ENCODE measurements at regions of chr19 and their contacts with region 1.

Region 1: GRCh38 chr19:29610563-29611271 is 4.6 kb downstream of the POP4 start:
- DNase-seq: peak; percentile 59
- ATAC-seq: peak; percentile 90
- H3K4me3 ChIP-seq: no peak overlapping the region
- H3K27ac ChIP-seq: peak overlapping the region; percentile 23; the same call in 1 of the 2 replicates
- H3K4me1 ChIP-seq: peaks cover 6% of the 10 kb centered on the region; the same call in 1 of the 2 replicates
- H3K27me3 ChIP-seq: no peaks in the 10 kb centered on the region
- CTCF ChIP-seq: peak; percentile 95

Region 2: DNA sequence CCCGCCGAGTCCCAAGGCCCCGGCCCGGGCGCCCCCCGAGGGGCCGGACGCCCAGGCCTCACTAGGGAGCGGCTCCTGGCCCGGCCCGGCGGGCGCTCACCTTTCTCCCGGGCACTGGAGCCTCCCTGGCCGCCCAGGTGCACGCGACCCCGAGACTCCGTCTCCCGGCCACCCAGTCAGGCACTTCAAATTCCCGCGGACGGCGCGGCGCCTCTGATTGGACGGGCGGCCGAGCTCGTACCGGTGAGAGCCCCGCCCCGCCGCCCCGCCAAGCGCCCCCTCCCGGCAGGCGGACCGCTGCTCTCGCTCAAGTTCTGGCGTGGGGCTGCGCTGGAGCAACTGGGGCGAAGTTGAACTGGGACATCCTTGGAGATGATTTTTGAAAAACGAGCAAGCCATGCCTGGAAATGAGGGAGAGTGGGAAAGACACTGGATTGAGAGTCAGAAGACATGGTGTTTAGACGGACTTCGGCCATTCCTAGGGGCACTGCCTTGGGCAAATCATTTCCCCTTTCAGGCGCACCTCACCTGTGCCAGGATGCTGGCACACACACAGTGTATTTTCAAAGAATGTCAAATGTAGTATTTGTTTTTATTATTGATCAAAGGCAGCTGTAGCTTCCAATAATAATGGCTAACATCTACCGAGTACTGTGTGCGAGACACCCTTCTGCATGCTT is 883.1 kb before region 1 on chr19:
- CTCF ChIA-PET with region 1: no interaction called
- POLR2A ChIA-PET with region 1: no interaction called
- in situ Hi-C with region 1: no loop called
- intact Hi-C with region 1: no loop called
- DNase-seq: no peak
- ATAC-seq: peak; percentile 51
- H3K4me3 ChIP-seq: no peak overlapping the region; a peak in 1 of 4 replicates
- H3K27ac ChIP-seq: no peak overlapping the region
- H3K4me1 ChIP-seq: no peaks in the 10 kb centered on the region
- H3K27me3 ChIP-seq: peaks cover 2% of the 10 kb centered on the region; the same call in 1 of the 2 replicates
- CTCF ChIP-seq: peak; percentile 69

Region 3: DNA sequence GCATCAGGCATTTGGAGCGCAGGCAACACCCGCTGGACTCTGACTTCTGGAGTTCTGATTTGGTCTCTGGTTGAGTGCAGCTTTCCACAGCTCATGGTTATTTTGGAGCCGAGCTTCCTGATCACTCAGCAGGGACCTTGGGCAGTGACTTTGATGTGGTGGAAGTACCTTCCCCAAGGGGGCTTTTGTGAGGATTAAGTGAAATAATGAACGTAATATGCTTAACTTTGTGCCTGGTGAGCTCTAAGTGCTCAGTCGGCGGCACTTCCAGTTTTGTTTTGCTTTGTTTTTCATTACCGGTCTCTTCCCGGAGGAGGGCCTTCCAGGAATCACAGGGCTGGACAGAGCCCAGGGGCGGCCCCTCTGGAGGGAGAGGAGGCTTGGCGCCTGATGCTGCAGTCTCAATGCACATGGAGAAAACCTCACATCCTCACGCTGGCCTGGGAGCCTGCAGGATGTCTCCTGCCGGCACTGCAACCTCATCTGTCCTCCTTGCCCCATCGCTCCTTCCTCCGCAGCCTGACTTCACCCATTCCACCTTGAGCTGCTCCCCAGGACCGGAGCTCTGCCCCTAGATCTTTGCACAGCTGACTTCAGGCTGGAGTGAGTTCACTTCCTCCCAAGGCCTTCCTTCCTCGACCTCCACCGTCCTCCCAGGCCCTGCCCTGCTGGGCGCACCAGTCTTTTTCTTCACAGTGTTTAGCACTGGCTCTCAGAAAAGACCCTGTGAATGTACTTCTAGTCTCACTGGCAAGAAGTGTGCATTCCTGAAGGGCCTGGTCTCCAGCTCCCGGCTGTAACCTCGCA is 56.1 kb after region 1 on chr19:
- CTCF ChIA-PET with region 1: interaction called, 13 read pairs
- POLR2A ChIA-PET with region 1: no interaction called
- in situ Hi-C with region 1: no loop called
- intact Hi-C with region 1: loop called (anchors 2 kb)
- DNase-seq: no peak
- ATAC-seq: peak; percentile 17
- H3K4me3 ChIP-seq: peak overlapping the region; percentile 71 to 77
- H3K27ac ChIP-seq: peak overlapping the region; percentile 78
- H3K4me1 ChIP-seq: peaks cover 60% of the 10 kb centered on the region
- H3K27me3 ChIP-seq: no peaks in the 10 kb centered on the region
- CTCF ChIP-seq: no peak

Region 4: GRCh38 chr19:29694669-29695627 is 84.2 kb after region 1 on chr19:
- CTCF ChIA-PET with region 1: interaction called, 3 read pairs
- POLR2A ChIA-PET with region 1: no interaction called
- in situ Hi-C with region 1: no loop called
- intact Hi-C with region 1: loop called (anchors 1 kb)
- DNase-seq: no peak
- ATAC-seq: peak; percentile 100
- H3K4me3 ChIP-seq: no peak overlapping the region
- H3K27ac ChIP-seq: no peak overlapping the region
- H3K4me1 ChIP-seq: peaks cover 8% of the 10 kb centered on the region; the same call in 1 of the 2 replicates
- H3K27me3 ChIP-seq: no peaks in the 10 kb centered on the region
- CTCF ChIP-seq: peak; percentile 98

Region 5: DNA sequence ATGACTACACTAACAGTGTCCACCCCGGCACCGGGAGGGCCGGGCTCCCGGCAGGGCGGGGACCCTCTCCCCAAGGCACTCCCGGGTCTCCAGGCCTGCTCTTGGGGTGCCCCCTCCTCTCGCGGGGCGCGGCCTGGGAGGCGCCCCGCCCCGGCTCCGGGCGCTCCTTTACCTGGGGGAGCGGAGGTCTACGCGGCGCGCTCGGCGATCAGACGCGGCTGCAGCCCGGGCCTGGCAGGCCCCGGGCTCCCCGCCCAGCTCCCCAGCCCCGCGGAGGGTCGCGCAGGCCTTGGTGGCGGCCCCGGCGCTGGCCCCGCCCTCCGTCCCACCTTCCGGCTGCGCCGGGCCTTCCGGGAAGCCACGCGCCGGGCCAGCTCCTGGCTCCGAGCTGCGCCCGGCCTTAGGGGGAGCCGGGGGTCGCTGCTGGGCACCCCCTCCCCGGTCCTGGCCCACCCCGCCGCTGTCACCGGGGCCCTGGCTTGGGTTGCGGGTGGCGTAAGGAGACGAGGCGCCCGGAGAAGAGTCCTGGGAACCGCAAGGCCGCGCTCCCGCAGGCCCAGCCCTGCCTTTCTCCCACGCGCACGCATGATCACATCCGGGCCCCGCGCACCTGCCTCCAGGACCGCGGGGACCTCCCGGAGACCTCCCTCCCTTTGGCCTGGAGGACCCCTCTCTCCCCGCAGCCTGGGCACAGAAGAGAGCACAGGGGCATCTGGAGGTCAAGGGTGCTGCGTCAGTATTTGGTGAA is 104.4 kb after region 1 on chr19 and contains the start of gene C19orf12:
- CTCF ChIA-PET with region 1: interaction called, 14 read pairs
- POLR2A ChIA-PET with region 1: interaction called, 10 read pairs
- in situ Hi-C with region 1: no loop called
- intact Hi-C with region 1: loop called (anchors 1 kb)
- DNase-seq: no peak
- ATAC-seq: peak; percentile 88
- H3K4me3 ChIP-seq: peak within 1 kb of the TSS; percentile 76 to 78
- H3K27ac ChIP-seq: peak within 1 kb of the TSS; percentile 96
- H3K4me1 ChIP-seq: peaks cover 15% of the 10 kb centered on the region
- H3K27me3 ChIP-seq: no peaks in the 10 kb centered on the region
- CTCF ChIP-seq: no peak
- total RNA-seq, gene C19orf12: 43.4 TPM